Endothelial cell of umbilical vein (primary cell): ENCODE measurements at regions of chr11 and their contacts with region 1.

Region 1: GRCh38 chr11:75142714-75143419 is 8.0 kb upstream of the SLCO2B1 start:
- DNase-seq: peak; percentile 90
- H3K4me3 ChIP-seq: no peak overlapping the region
- H3K27ac ChIP-seq: peak overlapping the region; percentile 6
- H3K4me1 ChIP-seq: peaks cover 16% of the 10 kb centered on the region
- H3K27me3 ChIP-seq: peaks cover 2 to 9% of the 10 kb centered on the region in 2 experiments
- CTCF ChIP-seq: no peak
- POLR2A ChIP-seq: no peak

Region 2: DNA sequence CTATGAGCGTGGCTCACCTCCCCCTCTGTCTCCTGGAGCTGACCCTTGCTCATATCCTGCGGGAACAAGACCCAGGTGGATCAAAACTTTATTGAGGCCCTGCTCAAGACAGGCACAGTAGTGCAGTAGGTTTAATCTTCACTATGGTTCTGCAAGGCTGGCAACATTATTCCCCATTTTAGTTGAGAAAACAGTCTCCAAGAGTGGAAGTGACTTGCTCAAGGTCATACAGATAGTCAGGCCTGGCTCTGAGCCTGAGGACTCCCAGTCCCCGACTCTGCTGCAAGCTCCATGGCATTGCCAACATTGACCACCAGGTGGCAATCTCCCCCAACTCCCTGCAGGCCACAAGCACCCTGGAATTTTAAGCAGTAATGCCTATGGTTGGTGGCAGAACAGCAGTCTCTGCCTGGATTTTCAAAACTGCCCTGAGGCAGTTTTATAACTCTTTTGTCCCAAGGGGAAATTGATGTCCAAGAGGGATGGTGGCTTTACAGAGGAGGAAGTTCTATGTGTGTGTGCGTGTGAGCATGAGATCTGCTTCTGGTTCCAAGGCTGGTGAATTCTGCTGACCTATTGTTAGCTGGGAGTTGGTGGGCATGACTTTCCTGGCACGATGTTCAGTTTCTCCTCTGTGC is 120.0 kb before region 1 on chr11:
- CTCF ChIA-PET with region 1: interaction called, 66 read pairs
- POLR2A ChIA-PET with region 1: no interaction called
- dilution Hi-C with region 1: no loop called
- intact Hi-C with region 1: loop called (anchors 1 kb)
- DNase-seq: peak; percentile 83
- H3K4me3 ChIP-seq: no peak overlapping the region
- H3K27ac ChIP-seq: no peak overlapping the region
- H3K4me1 ChIP-seq: no peaks in the 10 kb centered on the region
- H3K27me3 ChIP-seq: peaks cover 0 to 2% of the 10 kb centered on the region in 2 experiments
- CTCF ChIP-seq: peak; percentile 94 to 97
- POLR2A ChIP-seq: no peak

Region 3: GRCh38 chr11:75160192-75160757 is 17.4 kb after region 1 on chr11:
- CTCF ChIA-PET with region 1: interaction called, 23 read pairs
- POLR2A ChIA-PET with region 1: no interaction called
- dilution Hi-C with region 1: no loop called
- intact Hi-C with region 1: loop called (anchors 1 kb)
- DNase-seq: peak; percentile 20
- H3K4me3 ChIP-seq: no peak overlapping the region
- H3K27ac ChIP-seq: no peak overlapping the region
- H3K4me1 ChIP-seq: peaks cover 11% of the 10 kb centered on the region
- H3K27me3 ChIP-seq: peaks cover 0 to 2% of the 10 kb centered on the region in 2 experiments
- CTCF ChIP-seq: no peak
- POLR2A ChIP-seq: no peak

Region 4: DNA sequence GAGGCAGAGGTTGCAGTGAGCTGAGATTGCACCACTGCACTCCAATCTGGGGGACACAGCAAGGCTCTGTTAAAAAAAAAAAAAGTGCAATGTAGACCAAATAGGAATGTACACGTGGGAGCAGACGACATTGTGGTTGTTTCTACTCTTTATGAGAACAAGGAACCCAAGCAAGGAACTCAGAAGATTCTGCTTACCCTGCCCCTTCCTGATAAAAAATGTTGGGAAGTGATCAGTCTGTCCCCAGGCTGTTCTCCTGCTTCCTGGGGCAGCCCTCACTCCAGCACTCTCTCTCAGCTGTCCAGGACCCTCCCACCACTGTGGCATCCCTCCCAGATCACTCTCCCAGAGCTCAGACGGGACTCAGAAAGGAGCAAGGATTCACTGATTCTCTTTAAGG is 39.8 kb after region 1 on chr11:
- CTCF ChIA-PET with region 1: interaction called, 25 read pairs
- POLR2A ChIA-PET with region 1: no interaction called
- dilution Hi-C with region 1: no loop called
- intact Hi-C with region 1: no loop called
- DNase-seq: no peak
- H3K4me3 ChIP-seq: no peak overlapping the region
- H3K27ac ChIP-seq: no peak overlapping the region
- H3K4me1 ChIP-seq: no peaks in the 10 kb centered on the region
- H3K27me3 ChIP-seq: peaks cover 11 to 14% of the 10 kb centered on the region in 2 experiments
- CTCF ChIP-seq: no peak
- POLR2A ChIP-seq: no peak

Region 5: DNA sequence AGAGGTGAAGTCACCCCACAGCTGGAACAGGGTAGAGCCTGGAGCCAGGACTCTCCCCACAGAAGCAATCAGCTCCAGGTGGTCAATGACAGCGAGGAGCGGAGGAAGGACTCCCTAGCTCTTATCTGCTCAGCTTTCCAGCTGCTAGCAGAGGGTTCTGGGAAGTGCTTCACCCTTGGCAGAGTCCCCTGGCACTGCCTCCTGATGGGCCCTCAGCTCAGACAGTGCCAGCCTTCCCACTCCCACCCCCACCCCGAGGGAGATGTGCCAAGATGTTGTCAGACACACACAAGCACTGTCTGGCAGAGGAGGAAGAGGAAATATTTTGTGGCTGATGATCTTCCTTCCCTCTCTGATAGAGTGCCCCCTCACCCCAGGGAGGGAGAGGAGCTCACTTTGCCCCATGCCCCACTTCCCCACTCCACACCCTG is 52.3 kb after region 1 on chr11:
- CTCF ChIA-PET with region 1: interaction called, 1,202 read pairs
- POLR2A ChIA-PET with region 1: no interaction called
- dilution Hi-C with region 1: no loop called
- intact Hi-C with region 1: loop called (anchors 1 kb)
- DNase-seq: peak; percentile 10
- H3K4me3 ChIP-seq: no peak overlapping the region
- H3K27ac ChIP-seq: no peak overlapping the region
- H3K4me1 ChIP-seq: peaks cover 4% of the 10 kb centered on the region
- H3K27me3 ChIP-seq: peaks cover 0 to 2% of the 10 kb centered on the region in 2 experiments
- CTCF ChIP-seq: no peak
- POLR2A ChIP-seq: no peak

Region 6: DNA sequence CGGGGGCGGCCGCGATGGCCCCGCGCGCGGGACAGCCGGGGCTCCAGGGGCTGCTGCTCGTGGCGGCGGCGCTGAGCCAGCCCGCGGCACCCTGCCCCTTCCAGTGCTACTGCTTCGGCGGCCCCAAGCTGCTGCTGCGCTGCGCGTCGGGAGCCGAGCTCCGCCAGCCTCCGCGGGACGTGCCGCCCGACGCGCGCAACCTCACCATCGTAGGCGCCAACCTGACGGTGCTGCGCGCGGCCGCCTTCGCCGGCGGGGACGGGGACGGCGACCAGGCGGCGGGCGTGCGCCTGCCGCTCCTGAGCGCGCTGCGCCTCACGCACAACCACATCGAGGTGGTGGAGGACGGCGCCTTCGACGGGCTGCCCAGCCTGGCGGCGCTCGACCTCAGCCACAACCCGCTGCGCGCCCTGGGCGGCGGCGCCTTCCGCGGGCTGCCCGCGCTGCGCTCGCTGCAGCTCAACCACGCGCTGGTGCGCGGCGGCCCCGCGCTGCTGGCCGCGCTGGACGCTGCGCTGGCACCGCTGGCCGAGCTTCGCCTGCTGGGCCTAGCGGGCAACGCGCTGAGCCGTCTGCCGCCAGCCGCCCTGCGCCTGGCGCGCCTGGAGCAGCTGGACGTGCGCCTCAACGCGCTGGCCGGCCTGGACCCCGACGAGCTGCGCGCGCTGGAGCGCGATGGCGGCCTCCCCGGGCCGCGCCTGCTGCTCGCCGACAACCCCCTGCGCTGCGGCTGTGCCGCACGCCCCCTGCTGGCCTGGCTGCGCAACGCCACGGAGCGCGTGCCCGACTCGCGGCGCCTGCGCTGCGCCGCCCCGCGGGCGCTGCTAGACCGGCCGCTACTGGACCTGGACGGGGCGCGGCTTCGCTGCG is 98.4 kb after region 1 on chr11:
- CTCF ChIA-PET with region 1: interaction called, 507 read pairs
- POLR2A ChIA-PET with region 1: no interaction called
- dilution Hi-C with region 1: no loop called
- intact Hi-C with region 1: loop called (anchors 1 kb)
- DNase-seq: peak; percentile 85
- H3K4me3 ChIP-seq: peak overlapping the region in 2 of 3 experiments; percentile 4 to 31
- H3K27ac ChIP-seq: no peak overlapping the region
- H3K4me1 ChIP-seq: peaks cover 7% of the 10 kb centered on the region
- H3K27me3 ChIP-seq: peaks cover 50 to 51% of the 10 kb centered on the region in 2 experiments
- CTCF ChIP-seq: peak; percentile 61 to 99
- POLR2A ChIP-seq: no peak

Region 7: GRCh38 chr11:75525596-75526541 is 383.0 kb after region 1 on chr11 and contains the start of gene GDPD5:
- CTCF ChIA-PET with region 1: no interaction called
- POLR2A ChIA-PET with region 1: no interaction called
- dilution Hi-C with region 1: no loop called
- intact Hi-C with region 1: no loop called
- DNase-seq: peak; percentile 79
- H3K4me3 ChIP-seq: peak within 1 kb of the TSS; percentile 36 to 74 (median 68)
- H3K27ac ChIP-seq: no peak within 1 kb of the TSS
- H3K4me1 ChIP-seq: peaks cover 22% of the 10 kb centered on the region
- H3K27me3 ChIP-seq: no peaks in the 10 kb centered on the region
- CTCF ChIP-seq: peak; percentile 51 to 59
- POLR2A ChIP-seq: peak; percentile 14
- total RNA-seq, gene GDPD5: 50.1 and 79.2 TPM in 2 replicates